Natural killer cell (primary cell): ENCODE measurements at regions of chr5 and their contacts with region 1.

Region 1: DNA sequence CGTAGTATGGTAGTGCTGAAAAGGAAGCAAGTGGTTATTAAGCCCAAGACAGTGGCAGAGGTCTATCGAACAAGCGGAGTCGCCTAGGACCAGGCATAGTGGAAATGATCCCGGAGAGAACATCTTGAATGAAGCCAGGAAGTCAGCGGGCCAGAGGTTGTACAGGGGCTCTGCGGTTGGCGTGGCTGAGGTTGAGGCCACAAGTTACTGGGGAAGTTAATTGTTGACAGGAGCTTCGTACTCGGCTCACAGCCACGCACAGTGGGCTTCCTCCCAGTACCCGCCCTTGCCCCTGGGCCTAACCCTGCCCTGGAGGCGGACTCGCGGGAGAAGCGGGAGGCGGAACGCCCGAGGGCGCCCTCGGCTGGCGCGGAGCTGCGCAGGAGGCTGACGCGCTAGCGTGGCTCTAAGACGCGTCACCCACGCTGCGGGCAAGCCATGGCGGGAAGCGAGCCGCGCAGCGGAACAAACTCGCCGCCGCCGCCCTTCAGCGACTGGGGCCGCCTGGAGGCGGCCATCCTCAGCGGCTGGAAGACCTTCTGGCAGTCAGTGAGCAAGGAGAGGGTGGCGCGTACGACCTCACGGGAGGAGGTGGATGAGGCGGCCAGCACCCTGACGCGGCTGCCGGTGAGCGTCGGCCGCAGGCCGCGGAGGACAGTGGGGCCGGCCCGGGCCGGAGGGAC is at the start of gene FBXO4:
- DNase-seq: peak; percentile 83 to 95
- ATAC-seq: peak; percentile 92 to 97 (median 93)
- H3K4me3 ChIP-seq: peak within 1 kb of the TSS; percentile 81
- H3K4me3 Mint-ChIP-seq: peak within 1 kb of the TSS; percentile 89
- H3K27ac ChIP-seq: peak within 1 kb of the TSS; percentile 88
- H3K27ac Mint-ChIP-seq: peak within 1 kb of the TSS; percentile 94 to 96
- H3K4me1 ChIP-seq: peaks cover 13% of the 10 kb centered on the region
- H3K4me1 Mint-ChIP-seq: peaks cover 10 to 17% of the 10 kb centered on the region in 2 donors
- H3K27me3 ChIP-seq: no peaks in the 10 kb centered on the region
- H3K27me3 Mint-ChIP-seq: no peaks in the 10 kb centered on the region
- CTCF ChIP-seq: peak; percentile 61
- total RNA-seq, gene FBXO4: 13.2 to 14.9 (median 13.4) TPM

Region 2: GRCh38 chr5:41670854-41671479 is 254.0 kb before region 1 on chr5:
- intact Hi-C with region 1: no loop called
- DNase-seq: no peak
- ATAC-seq: no peak
- H3K4me3 ChIP-seq: no peak overlapping the region
- H3K4me3 Mint-ChIP-seq: no peak overlapping the region
- H3K27ac ChIP-seq: no peak overlapping the region
- H3K27ac Mint-ChIP-seq: no peak overlapping the region
- H3K4me1 ChIP-seq: no peaks in the 10 kb centered on the region
- H3K4me1 Mint-ChIP-seq: no peaks in the 10 kb centered on the region
- H3K27me3 ChIP-seq: no peaks in the 10 kb centered on the region
- H3K27me3 Mint-ChIP-seq: no peaks in the 10 kb centered on the region
- CTCF ChIP-seq: no peak

Region 3: DNA sequence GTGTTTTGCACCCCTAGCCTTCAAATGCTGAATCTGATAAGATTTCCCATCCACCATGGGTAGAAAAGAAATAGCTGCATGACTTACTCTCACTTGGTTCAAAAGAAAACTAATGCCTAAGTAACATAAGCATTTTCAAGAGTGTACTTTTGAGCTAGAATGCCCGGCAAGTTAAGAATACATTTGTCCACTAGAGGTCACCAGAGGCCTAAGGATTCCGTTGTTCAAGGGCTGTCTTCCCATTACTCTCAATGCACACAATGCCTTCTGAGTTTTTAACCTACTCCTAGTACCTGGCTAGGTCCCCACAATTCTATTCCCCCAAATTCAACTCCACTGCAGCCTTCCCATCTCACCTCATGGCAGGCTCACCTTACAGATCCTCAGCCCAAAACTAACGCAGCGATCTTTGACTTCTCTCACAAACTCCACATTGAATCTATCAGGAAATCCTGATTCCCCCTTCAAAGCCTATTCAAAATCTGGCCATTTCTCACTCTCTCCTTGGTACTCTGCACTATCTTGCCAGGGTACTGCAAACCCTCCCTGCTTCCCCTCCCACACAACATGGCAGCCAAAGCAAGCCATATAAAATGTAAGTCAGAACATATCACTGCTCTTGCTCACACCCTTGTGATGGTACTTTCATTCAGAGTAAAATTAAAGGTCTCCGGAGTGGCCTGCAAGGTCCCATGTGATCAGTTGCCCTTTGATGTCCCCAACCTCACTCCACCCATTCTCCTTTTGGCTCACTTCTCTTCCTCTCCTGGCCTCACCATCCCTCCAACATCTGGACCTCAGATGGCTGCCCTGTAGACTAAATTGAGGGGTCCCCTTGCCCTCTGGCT is 68.1 kb before region 1 on chr5:
- intact Hi-C with region 1: loop called (anchors 5 kb)
- DNase-seq: peak; percentile 20 to 89
- ATAC-seq: peak; percentile 86 to 95 (median 91)
- H3K4me3 ChIP-seq: no peak overlapping the region
- H3K4me3 Mint-ChIP-seq: no peak overlapping the region
- H3K27ac ChIP-seq: no peak overlapping the region
- H3K27ac Mint-ChIP-seq: peak overlapping the region in 1 of 2 donors; percentile 31
- H3K4me1 ChIP-seq: no peaks in the 10 kb centered on the region
- H3K4me1 Mint-ChIP-seq: peaks cover 0 to 5% of the 10 kb centered on the region in 2 donors
- H3K27me3 ChIP-seq: no peaks in the 10 kb centered on the region
- H3K27me3 Mint-ChIP-seq: no peaks in the 10 kb centered on the region
- CTCF ChIP-seq: peak; percentile 85

Region 4: DNA sequence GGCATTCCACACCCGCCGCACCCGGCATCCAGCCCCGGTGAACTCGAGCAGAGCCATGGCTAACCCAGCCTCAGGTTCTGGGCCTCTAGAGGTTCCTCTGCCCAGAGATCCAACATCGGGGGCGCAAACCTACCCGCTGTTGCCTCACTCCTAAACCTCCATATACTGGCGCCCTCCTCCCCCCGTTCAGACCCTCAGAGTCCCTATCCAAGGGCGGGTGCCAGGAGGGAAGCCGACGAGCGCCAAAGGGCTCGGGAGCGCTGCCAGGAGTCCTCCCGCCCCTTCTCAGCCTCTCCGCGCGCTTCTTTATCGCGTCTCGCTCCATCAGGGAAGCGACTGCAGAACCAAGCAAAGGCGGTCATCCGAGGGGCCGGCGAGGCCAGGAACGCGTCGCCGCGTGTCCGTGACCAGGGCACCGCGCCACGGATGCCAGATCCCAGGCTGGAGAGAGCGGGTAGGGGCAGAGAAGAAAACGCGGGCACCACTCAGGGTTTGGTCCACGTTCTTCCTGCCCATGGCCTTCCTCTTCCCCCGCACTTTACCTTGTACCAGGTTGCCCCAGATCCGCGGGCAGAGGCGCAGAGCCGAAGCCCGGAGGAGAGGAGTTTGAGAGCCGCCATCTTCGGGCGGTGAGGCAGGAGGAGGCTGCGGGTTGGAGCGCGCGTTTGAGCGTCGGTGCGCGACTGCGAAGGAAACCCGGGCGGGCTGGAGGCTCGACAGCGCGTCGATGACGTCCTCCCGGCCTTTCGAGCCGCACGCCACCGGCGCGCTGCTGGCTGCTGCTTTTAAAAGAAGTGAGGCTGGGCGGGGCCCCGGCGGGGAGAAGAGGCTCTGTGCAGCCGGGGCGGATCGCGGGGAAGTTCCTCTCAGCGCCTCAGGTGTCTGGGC is 55.0 kb before region 1 on chr5 and contains the start of gene OXCT1:
- intact Hi-C with region 1: loop called (anchors 1 kb)
- DNase-seq: peak; percentile 84 to 97
- ATAC-seq: peak; percentile 91 to 95 (median 93)
- H3K4me3 ChIP-seq: peak within 1 kb of the TSS; percentile 94
- H3K4me3 Mint-ChIP-seq: peak within 1 kb of the TSS; percentile 91
- H3K27ac ChIP-seq: peak within 1 kb of the TSS; percentile 80
- H3K27ac Mint-ChIP-seq: peak within 1 kb of the TSS; percentile 84 to 89
- H3K4me1 ChIP-seq: peaks cover 22% of the 10 kb centered on the region
- H3K4me1 Mint-ChIP-seq: peaks cover 22 to 34% of the 10 kb centered on the region in 2 donors
- H3K27me3 ChIP-seq: no peaks in the 10 kb centered on the region
- H3K27me3 Mint-ChIP-seq: peaks cover 3 to 4% of the 10 kb centered on the region in 2 donors
- CTCF ChIP-seq: no peak
- total RNA-seq, gene OXCT1: 17.1 to 19.9 (median 18.0) TPM

Region 5: DNA sequence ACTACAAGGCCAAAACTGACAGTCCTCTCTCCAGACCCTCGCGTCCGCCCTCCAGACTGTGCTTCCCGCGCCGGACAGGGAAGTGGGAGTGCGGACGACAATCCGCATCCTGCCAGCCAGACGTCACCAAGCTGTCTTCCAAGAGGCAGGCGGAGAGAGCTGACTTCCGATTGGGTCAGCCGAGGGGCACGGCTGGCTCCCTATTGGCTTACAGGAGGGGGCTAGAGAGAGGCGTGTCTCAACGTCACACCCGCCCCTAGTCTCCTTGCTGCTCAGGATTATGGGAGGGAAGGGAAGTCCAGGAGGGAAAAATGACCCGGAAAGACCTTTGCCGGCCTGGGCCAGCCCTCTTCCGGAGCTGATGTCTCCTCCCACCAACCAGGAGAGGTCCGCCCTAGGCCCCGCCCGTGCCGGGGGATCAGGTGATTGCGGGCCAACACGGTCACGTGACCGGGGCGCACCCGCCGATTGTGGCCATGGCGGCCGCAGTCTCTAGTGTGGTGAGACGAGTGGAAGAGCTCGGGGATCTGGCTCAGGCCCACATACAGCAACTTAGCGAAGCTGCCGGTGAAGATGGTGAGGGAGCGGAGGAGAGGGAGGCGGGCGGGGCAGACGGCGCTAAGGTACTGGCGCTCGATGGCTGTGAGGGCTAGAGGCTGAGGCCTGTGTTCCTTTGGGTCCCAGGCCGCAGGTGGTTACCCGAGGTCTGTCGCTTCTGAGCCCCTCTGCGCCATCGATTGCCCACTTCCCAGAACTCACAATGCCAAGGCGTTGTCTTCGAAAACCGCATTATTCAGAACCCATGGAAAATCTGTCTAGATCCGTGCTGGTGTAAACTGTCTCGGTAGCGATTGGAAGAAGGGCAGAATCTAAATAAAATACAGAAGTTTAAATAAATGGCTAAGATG is 20.9 kb before region 1 on chr5 and contains the start of gene RIMOC1:
- intact Hi-C with region 1: loop called (anchors 1 kb)
- DNase-seq: peak; percentile 96 to 98
- ATAC-seq: peak; percentile 87 to 95 (median 87)
- H3K4me3 ChIP-seq: peak within 1 kb of the TSS; percentile 59
- H3K4me3 Mint-ChIP-seq: peak within 1 kb of the TSS; percentile 98
- H3K27ac ChIP-seq: peak within 1 kb of the TSS; percentile 91
- H3K27ac Mint-ChIP-seq: peak within 1 kb of the TSS; percentile 99
- H3K4me1 ChIP-seq: peaks cover 10% of the 10 kb centered on the region
- H3K4me1 Mint-ChIP-seq: peaks cover 22 to 31% of the 10 kb centered on the region in 2 donors
- H3K27me3 ChIP-seq: no peaks in the 10 kb centered on the region
- H3K27me3 Mint-ChIP-seq: peaks cover 6 to 11% of the 10 kb centered on the region in 2 donors
- CTCF ChIP-seq: no peak
- total RNA-seq, gene RIMOC1: 9.9 to 18.1 (median 14.2) TPM

Region 6: GRCh38 chr5:43019614-43020293 is 1094.7 kb after region 1 on chr5:
- intact Hi-C with region 1: loop called (anchors 10 kb)
- DNase-seq: peak; percentile 73 to 96
- ATAC-seq: peak; percentile 64 to 83 (median 64)
- H3K4me3 ChIP-seq: peak overlapping the region; percentile 58
- H3K4me3 Mint-ChIP-seq: peak overlapping the region; percentile 91
- H3K27ac ChIP-seq: peak overlapping the region; percentile 93
- H3K27ac Mint-ChIP-seq: peak overlapping the region; percentile 99 to 100
- H3K4me1 ChIP-seq: peaks cover 22% of the 10 kb centered on the region
- H3K4me1 Mint-ChIP-seq: peaks cover 45 to 56% of the 10 kb centered on the region in 2 donors
- H3K27me3 ChIP-seq: no peaks in the 10 kb centered on the region
- H3K27me3 Mint-ChIP-seq: no peaks in the 10 kb centered on the region
- CTCF ChIP-seq: peak; percentile 61